ENCODE measurements at regions of chr20 and their contacts with region 1.

Region 1: GRCh38 chr20:53032478-53032932 is 60.3 kb downstream of the TSHZ2 start:
- DNase-seq: no peak
- H3K4me3 Mint-ChIP-seq: no peak overlapping the region
- H3K27ac Mint-ChIP-seq: no peak overlapping the region
- H3K4me1 Mint-ChIP-seq: peaks cover 70% of the 10 kb centered on the region
- H3K27me3 Mint-ChIP-seq: no peaks in the 10 kb centered on the region

Region 2: GRCh38 chr20:52747845-52748284 is 284.6 kb before region 1 on chr20:
- CTCF ChIA-PET with region 1: no interaction called
- intact Hi-C with region 1: loop called (anchors 10 kb)
- DNase-seq: no peak
- H3K4me3 Mint-ChIP-seq: no peak overlapping the region
- H3K27ac Mint-ChIP-seq: no peak overlapping the region
- H3K4me1 Mint-ChIP-seq: no peaks in the 10 kb centered on the region
- H3K27me3 Mint-ChIP-seq: peaks cover under 1% of the 10 kb centered on the region